ENCODE measurements at regions of chr7 and their contacts with region 1.

Region 1: GRCh38 chr7:73606801-73607691 is 17.3 kb downstream of the MLXIPL start:
- DNase-seq: peak; percentile 93
- ATAC-seq: peak; percentile 86
- H3K4me3 Mint-ChIP-seq: peak overlapping the region; percentile 71
- H3K27ac Mint-ChIP-seq: peak overlapping the region; percentile 57; the same call in 1 of the 2 replicates
- H3K4me1 Mint-ChIP-seq: peaks cover 3% of the 10 kb centered on the region
- H3K27me3 Mint-ChIP-seq: peaks cover 4% of the 10 kb centered on the region
- CTCF ChIP-seq: peak; percentile 97

Region 2: GRCh38 chr7:73565675-73566340 is 41.2 kb before region 1 on chr7:
- CTCF ChIA-PET with region 1: no interaction called
- POLR2A ChIA-PET with region 1: no interaction called
- DNase-seq: no peak
- ATAC-seq: no peak
- H3K4me3 Mint-ChIP-seq: no peak overlapping the region
- H3K27ac Mint-ChIP-seq: no peak overlapping the region
- H3K4me1 Mint-ChIP-seq: peaks cover 8% of the 10 kb centered on the region; the same call in 1 of the 2 replicates
- H3K27me3 Mint-ChIP-seq: peaks cover 10% of the 10 kb centered on the region
- CTCF ChIP-seq: no peak

Region 3: DNA sequence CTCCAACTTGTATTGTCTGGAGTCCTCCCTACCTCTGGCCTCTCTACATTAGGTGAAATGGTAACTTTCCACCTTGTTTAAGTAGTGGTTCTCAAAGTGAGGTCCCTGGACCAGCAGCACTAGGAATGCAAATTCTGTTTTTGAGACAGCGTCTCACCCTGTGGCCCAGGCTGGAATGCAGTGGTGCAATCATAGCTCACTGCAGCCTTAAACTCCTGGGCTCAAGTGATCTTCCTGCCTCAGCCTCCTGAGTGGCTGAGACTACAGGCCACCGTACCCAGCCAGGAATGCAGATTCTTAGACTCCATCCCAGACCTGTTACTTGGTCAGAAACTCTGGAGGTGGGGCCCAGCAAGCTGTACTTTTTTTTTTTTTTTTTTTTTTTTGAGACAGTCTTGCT is 21.9 kb before region 1 on chr7:
- CTCF ChIA-PET with region 1: interaction called, 30 read pairs
- POLR2A ChIA-PET with region 1: interaction called, 3 read pairs
- DNase-seq: no peak
- ATAC-seq: no peak
- H3K4me3 Mint-ChIP-seq: no peak overlapping the region
- H3K27ac Mint-ChIP-seq: no peak overlapping the region
- H3K4me1 Mint-ChIP-seq: no peaks in the 10 kb centered on the region; the same call in 1 of the 2 replicates
- H3K27me3 Mint-ChIP-seq: peaks cover 64% of the 10 kb centered on the region
- CTCF ChIP-seq: no peak

Region 4: DNA sequence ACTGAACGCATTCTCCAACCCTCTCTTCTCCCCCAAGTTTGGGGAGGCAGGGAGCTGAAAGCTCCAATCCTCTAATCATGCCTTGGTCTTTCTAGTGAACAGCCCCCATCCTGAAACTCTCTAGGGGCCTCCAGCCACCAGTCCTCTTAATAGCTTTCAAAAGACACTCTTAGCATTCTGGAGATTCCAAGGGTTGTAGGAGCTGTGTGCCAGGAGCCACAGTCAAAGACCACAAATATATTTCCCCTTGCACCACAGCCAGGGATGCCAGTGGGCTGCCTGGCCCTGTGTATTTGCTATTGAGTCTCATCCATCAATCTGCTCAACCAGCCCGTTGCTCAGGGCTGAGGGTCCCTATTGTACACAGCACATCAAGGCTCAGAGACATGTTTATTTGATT is 35.8 kb after region 1 on chr7:
- CTCF ChIA-PET with region 1: interaction called, 14 read pairs
- POLR2A ChIA-PET with region 1: no interaction called
- DNase-seq: no peak
- ATAC-seq: no peak
- H3K4me3 Mint-ChIP-seq: no peak overlapping the region
- H3K27ac Mint-ChIP-seq: no peak overlapping the region
- H3K4me1 Mint-ChIP-seq: peaks cover 8% of the 10 kb centered on the region
- H3K27me3 Mint-ChIP-seq: peaks cover 34% of the 10 kb centered on the region
- CTCF ChIP-seq: no peak

Region 5: DNA sequence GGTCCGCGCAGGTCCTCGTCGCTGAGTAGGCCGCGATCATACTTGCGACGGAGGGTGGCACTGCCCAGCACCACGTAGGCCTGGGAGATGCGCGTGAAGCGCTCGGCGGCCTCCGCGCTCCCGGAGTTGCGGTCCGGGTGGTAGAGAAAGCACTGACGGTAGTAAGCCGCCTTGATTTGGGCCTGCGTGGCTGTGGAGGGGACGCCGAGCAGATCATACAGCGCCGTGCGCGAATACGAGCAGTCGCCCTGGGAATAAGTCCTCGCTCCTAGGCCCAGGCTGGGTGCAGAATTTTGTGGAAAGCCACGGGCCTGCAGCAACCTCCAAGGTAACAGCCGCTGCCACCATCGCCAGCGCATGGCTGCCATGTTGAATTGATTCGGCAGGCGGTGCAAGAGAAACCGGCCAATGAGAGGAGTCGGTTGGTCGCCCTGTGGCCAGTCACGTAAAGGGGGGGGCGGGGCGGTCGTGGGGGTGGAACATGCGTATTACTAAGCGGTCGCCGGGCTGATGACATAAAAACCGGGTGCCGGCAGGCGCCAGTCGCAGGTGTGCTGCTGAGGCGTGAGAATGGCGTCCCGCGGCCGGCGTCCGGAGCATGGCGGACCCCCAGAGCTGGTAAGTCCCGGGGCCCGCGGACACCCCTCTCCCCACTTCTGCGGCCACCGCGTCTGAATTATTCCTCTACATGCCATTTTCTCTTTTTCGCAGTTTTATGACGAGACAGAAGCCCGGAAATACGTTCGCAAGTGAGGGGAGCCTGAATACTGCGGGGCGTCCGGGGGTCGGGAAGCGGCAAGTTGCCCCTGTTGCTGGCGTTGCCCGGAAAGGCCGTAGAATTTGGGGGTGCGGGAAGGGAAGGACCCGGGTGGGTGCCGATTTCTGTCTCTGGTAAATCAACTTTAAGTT is 76.3 kb after region 1 on chr7 and contains the starts of genes BUD23 and DNAJC30:
- CTCF ChIA-PET with region 1: interaction called, 26 read pairs
- POLR2A ChIA-PET with region 1: no interaction called
- DNase-seq: peak; percentile 97
- ATAC-seq: peak; percentile 95
- H3K4me3 Mint-ChIP-seq: peak within 1 kb of the TSS; percentile 95
- H3K27ac Mint-ChIP-seq: peak within 1 kb of the TSS; percentile 94
- H3K4me1 Mint-ChIP-seq: peaks cover 19% of the 10 kb centered on the region
- H3K27me3 Mint-ChIP-seq: no peaks in the 10 kb centered on the region
- CTCF ChIP-seq: no peak
- total RNA-seq, gene BUD23: 80.5 to 91.9 TPM (median 84.4 TPM) in 3 replicates
- total RNA-seq, gene DNAJC30: 6.8 to 7.1 TPM (median 6.8 TPM) in 3 replicates

Region 6: GRCh38 chr7:73718905-73719805 is 112.1 kb after region 1 on chr7 and contains the start of gene STX1A:
- CTCF ChIA-PET with region 1: interaction called, 19 read pairs
- POLR2A ChIA-PET with region 1: no interaction called
- DNase-seq: peak; percentile 68
- ATAC-seq: peak; percentile 94
- H3K4me3 Mint-ChIP-seq: peak within 1 kb of the TSS; percentile 64
- H3K27ac Mint-ChIP-seq: no peak within 1 kb of the TSS
- H3K4me1 Mint-ChIP-seq: no peaks in the 10 kb centered on the region
- H3K27me3 Mint-ChIP-seq: peaks cover 42% of the 10 kb centered on the region
- CTCF ChIP-seq: no peak
- total RNA-seq, gene STX1A: 17.7 to 20.4 TPM (median 18.5 TPM) in 3 replicates

Region 7: GRCh38 chr7:73769992-73770859 is 163.2 kb after region 1 on chr7 and contains the start of gene CLDN3:
- CTCF ChIA-PET with region 1: no interaction called
- POLR2A ChIA-PET with region 1: no interaction called
- DNase-seq: peak; percentile 93
- ATAC-seq: peak; percentile 89
- H3K4me3 Mint-ChIP-seq: peak within 1 kb of the TSS; percentile 79
- H3K27ac Mint-ChIP-seq: peak within 1 kb of the TSS; percentile 91
- H3K4me1 Mint-ChIP-seq: peaks cover 10% of the 10 kb centered on the region
- H3K27me3 Mint-ChIP-seq: peaks cover 15% of the 10 kb centered on the region
- CTCF ChIP-seq: no peak
- total RNA-seq, gene CLDN3: 20.7 to 35.1 TPM (median 34.8 TPM) in 3 replicates

Measured in WTC11 (cell line).